ENCODE measurements at regions of chr9 and their contacts with region 1.

Region 1: DNA sequence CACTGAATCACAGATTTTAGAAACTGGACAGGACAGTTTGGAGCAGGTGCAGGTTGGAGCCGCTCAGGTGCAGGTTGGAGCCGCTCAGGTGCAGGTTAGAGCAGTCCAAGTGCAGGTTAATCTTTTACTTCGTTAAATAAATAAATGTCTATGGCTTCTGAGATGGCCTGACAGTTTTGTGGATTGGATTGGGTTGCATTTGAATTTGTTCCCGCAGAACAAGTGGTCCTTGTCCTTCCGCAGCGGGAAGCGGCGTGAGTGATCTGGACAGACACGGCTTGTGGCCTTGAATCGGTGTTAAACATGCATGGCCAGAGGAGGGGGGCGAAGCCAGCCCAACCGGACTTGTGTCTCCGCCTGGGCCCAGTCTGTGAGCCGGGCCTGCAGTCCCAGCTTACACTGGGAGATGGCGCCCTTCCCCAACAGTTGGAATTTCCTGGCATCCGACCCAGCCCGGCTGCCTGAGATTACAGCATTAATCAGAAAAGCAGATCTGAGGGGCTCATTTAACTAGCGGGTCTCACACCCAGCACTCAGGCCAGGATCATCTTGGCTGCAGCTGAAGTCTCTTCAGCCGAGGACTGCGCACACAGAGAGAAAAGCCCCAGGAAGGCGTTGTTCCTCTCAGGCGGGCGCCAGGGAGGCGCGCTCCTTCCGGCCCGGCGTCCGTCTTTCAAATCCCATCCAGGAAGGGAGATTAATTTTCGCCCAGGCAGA is 1.5 kb upstream of the OLFM1 start:
- ATAC-seq: peak; percentile 45 to 71 (median 58)
- H3K4me3 ChIP-seq: peak overlapping the region in 2 of 5 donors; percentile 4 to 6
- H3K27ac ChIP-seq: no peak overlapping the region
- H3K4me1 ChIP-seq: peaks cover 16 to 21% of the 10 kb centered on the region in 2 donors

Region 2: GRCh38 chr9:134983074-134983473 is 102.9 kb before region 1 on chr9:
- in situ Hi-C with region 1: no loop called
- ATAC-seq: peak in 2 of 8 experiments; percentile 43 to 69
- H3K4me3 ChIP-seq: no peak overlapping the region
- H3K27ac ChIP-seq: no peak overlapping the region
- H3K4me1 ChIP-seq: no peaks in the 10 kb centered on the region

Region 3: DNA sequence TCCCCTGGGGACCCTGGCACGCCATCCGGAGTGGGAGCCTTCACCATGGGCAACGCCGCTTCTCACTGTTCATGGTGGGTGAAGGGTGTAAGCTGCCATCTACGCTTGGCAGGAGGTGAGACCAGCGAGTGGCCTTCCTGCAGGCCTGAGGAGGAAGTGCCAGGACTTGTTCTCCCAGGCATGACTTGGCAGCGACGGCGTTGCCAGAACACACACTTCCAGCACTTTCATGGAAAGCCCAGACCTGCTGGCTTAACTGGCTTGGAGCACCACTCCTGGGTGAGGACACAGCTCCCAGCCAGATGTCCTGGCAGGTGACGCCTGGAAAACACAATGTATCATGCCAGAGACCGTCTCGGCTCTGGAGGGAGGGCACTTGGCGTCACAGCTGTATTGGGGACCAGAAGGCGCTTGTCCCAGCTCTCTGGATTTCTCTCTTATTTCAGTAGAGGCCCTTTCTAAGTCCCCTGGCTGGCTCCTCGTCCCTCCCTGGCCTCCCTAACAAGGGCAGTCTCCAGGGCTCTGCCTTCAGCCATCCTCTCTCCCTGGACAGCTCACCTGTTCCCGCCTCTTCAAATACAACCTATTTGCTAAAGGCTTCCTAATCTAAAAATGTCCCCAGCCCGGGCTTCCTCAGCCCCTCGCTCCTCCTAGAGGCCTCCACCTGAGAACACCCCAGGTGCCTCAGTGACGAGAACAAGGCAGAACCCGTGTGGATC is 189.7 kb after region 1 on chr9:
- in situ Hi-C with region 1: no loop called
- ATAC-seq: no peak
- H3K4me3 ChIP-seq: no peak overlapping the region
- H3K27ac ChIP-seq: no peak overlapping the region
- H3K4me1 ChIP-seq: peaks cover 16 to 32% of the 10 kb centered on the region in 2 donors

Region 4: GRCh38 chr9:135343837-135344522 is 258.0 kb after region 1 on chr9:
- in situ Hi-C with region 1: loop called in 5 of 9 experiments (anchors 5 to 10 kb)
- ATAC-seq: peak; percentile 78 to 92 (median 86)
- H3K4me3 ChIP-seq: peak overlapping the region in 1 of 5 donors; percentile 16
- H3K27ac ChIP-seq: no peak overlapping the region
- H3K4me1 ChIP-seq: peaks cover 31 to 46% of the 10 kb centered on the region in 2 donors

Region 5: GRCh38 chr9:135410831-135411473 is 325.0 kb after region 1 on chr9:
- in situ Hi-C with region 1: loop called in 8 of 9 experiments (anchors 5 to 25 kb)
- ATAC-seq: no peak
- H3K4me3 ChIP-seq: no peak overlapping the region
- H3K27ac ChIP-seq: no peak overlapping the region
- H3K4me1 ChIP-seq: no peaks in the 10 kb centered on the region